ENCODE measurements at regions of chr10 and their contacts with region 1.

Region 1: DNA sequence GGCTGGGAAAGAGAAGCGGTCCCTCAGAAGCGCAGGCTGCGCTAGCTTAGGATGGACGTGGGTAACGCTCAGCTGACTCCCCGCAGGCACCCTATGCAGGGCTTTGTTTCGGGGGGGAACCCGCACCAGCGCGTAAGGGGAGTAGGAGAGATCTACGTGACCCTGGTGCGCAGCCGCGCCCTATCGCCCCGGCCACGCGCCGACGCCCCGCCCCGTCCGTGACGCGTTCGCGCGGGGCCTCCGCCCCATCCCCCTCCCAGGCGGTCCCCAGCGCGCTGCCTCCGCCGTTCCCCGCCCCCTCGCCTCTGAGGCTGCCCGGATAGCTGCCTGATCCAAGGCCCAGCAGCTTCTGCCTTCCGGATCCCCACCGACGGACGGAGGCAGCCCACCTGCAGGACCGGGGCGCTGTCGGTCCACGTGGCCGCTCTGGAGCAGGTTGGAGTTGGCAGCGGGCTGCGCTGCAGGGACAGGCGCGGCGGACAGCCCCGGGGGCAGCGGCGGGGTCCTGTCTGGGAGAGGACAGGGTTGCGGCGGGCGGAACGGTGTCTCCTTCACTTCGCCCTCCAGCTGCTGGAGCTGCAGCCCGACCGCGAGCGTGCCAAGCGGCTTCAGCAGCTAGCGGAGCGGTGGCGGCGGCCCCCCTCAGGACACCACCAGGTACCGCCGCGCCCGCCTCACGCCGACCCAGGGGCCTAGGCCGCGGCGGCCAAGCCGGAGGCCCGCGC is at the start of gene VDAC2:
- DNase-seq: peak; percentile 95
- H3K4me3 Mint-ChIP-seq: peak within 1 kb of the TSS; percentile 97
- H3K27ac Mint-ChIP-seq: peak within 1 kb of the TSS; percentile 100
- H3K4me1 Mint-ChIP-seq: peaks cover 32% of the 10 kb centered on the region
- H3K27me3 Mint-ChIP-seq: no peaks in the 10 kb centered on the region
- total RNA-seq, gene VDAC2: 219 and 221 TPM in 2 replicates

Region 2: GRCh38 chr10:75137533-75138438 is 72.7 kb before region 1 on chr10:
- intact Hi-C with region 1: loop called (anchors 5 kb)
- DNase-seq: no peak
- H3K4me3 Mint-ChIP-seq: no peak overlapping the region
- H3K27ac Mint-ChIP-seq: peak overlapping the region; percentile 33
- H3K4me1 Mint-ChIP-seq: peaks cover 24% of the 10 kb centered on the region
- H3K27me3 Mint-ChIP-seq: no peaks in the 10 kb centered on the region

Region 3: GRCh38 chr10:75187961-75188426 is 22.4 kb before region 1 on chr10:
- intact Hi-C with region 1: loop called (anchors 2 kb)
- DNase-seq: peak; percentile 58
- H3K4me3 Mint-ChIP-seq: no peak overlapping the region
- H3K27ac Mint-ChIP-seq: peak overlapping the region; percentile 42
- H3K4me1 Mint-ChIP-seq: peaks cover 8% of the 10 kb centered on the region
- H3K27me3 Mint-ChIP-seq: no peaks in the 10 kb centered on the region

Region 4: GRCh38 chr10:75235375-75236177 is 25.1 kb after region 1 on chr10 and contains the start of gene COMTD1:
- intact Hi-C with region 1: loop called (anchors 1 kb)
- DNase-seq: peak; percentile 92
- H3K4me3 Mint-ChIP-seq: peak within 1 kb of the TSS; percentile 81
- H3K27ac Mint-ChIP-seq: peak within 1 kb of the TSS; percentile 70
- H3K4me1 Mint-ChIP-seq: peaks cover 16% of the 10 kb centered on the region
- H3K27me3 Mint-ChIP-seq: no peaks in the 10 kb centered on the region
- total RNA-seq, gene COMTD1: 38.5 and 38.7 TPM in 2 replicates

Measured in activated T-helper 2 cell treated with anti-CD3 and anti-CD28 coated beads, Interferon-gamma antibody, Interleukin-2, Interleukin-4, amounts not matched to agents 10 μg/mL and 5 μg/mL and 100 μg/mL, durations not matched to agents 14 hours and 24 hours and 36 hours (primary cell).